ENCODE measurements at regions of chr10 and their contacts with region 1.

Region 1: GRCh38 chr10:48353246-48353645 is 46.8 kb downstream of the MAPK8 start:
- DNase-seq: no peak
- H3K4me3 ChIP-seq: no peak overlapping the region
- H3K27ac ChIP-seq: no peak overlapping the region
- H3K4me1 ChIP-seq: no peaks in the 10 kb centered on the region
- H3K27me3 ChIP-seq: no peaks in the 10 kb centered on the region
- CTCF ChIP-seq: no peak
- EP300 ChIP-seq: no peak
- POLR2A ChIP-seq: no peak
- RAD21 ChIP-seq: no peak

Region 2: GRCh38 chr10:48324580-48324979 is 28.7 kb before region 1 on chr10:
- CTCF ChIA-PET with region 1: no interaction called
- POLR2A ChIA-PET with region 1: no interaction called
- DNase-seq: no peak
- H3K4me3 ChIP-seq: no peak overlapping the region
- H3K27ac ChIP-seq: no peak overlapping the region
- H3K4me1 ChIP-seq: peaks cover 0 to 2% (median under 1%) of the 10 kb centered on the region in 4 experiments; a peak in 2 of 7 replicates
- H3K27me3 ChIP-seq: no peaks in the 10 kb centered on the region
- CTCF ChIP-seq: no peak
- EP300 ChIP-seq: no peak
- POLR2A ChIP-seq: no peak
- RAD21 ChIP-seq: no peak

Region 3: GRCh38 chr10:48363617-48364355 is 10.5 kb after region 1 on chr10:
- CTCF ChIA-PET with region 1: interaction called, 12 read pairs
- POLR2A ChIA-PET with region 1: no interaction called
- DNase-seq: no peak
- H3K4me3 ChIP-seq: no peak overlapping the region
- H3K27ac ChIP-seq: no peak overlapping the region
- H3K4me1 ChIP-seq: peaks cover 0 to 3% (median 0%) of the 10 kb centered on the region in 4 experiments; a peak in 1 of 7 replicates
- H3K27me3 ChIP-seq: no peaks in the 10 kb centered on the region
- CTCF ChIP-seq: peak in 2 of 3 experiments; percentile 66 to 68; a peak in 3 of 4 replicates
- EP300 ChIP-seq: no peak
- POLR2A ChIP-seq: no peak
- RAD21 ChIP-seq: peak; percentile 89 to 91

Measured in H1 (cell line).